Transverse colon (tissue), 4 donors: ENCODE measurements at regions of chr9 and their contacts with region 1.

Region 1: DNA sequence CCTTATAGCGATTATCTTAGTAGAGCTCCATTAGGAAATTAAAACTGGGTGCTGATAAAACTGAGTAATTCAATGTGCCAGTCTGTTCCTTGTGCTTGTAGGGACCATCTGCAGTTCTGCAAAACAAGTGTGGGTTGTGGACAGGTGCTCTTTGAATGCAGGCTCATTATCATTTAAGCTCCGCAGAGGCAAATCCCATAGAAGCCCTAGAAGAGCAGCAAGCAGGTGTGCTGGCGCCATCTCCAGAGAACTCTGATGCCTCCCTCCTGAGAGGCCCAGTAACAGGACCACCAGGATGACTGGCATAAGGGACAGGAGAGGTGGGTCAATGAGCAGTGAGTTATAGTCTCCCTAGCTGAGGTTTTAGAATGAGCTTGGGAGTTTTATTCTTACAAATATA is 1342.4 kb upstream of the DMAC1 start:
- DNase-seq: no peak
- H3K4me3 ChIP-seq: no peak overlapping the region
- H3K27ac ChIP-seq: no peak overlapping the region
- H3K4me1 ChIP-seq: no peaks in the 10 kb centered on the region
- H3K27me3 ChIP-seq: no peaks in the 10 kb centered on the region
- CTCF ChIP-seq: no peak
- EP300 ChIP-seq: no peak
- POLR2A ChIP-seq: no peak

Region 2: DNA sequence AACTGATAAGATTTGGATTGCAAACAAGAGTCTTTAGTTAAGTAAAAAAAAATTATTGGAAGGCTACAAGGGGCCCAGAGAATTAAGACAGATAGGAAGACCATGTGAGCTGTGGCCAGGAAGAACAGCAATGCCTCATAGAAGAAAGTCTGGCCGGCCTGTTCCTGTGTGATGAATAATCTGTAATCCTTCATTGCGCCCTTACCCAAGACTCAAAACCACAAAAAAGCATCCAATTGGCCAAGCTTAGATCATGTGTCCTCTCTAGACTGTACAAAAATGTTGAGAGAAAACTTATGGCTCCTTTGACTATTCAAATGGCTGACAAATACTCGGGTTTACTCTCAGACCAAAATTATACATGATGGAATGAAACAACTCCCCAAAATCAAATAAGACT is 87.3 kb after region 1 on chr9:
- in situ Hi-C with region 1: loop called in 1 of 4 experiments (anchors 25 kb)
- intact Hi-C with region 1: no loop called
- DNase-seq: no peak
- H3K4me3 ChIP-seq: no peak overlapping the region
- H3K27ac ChIP-seq: no peak overlapping the region
- H3K4me1 ChIP-seq: no peaks in the 10 kb centered on the region
- H3K27me3 ChIP-seq: no peaks in the 10 kb centered on the region
- CTCF ChIP-seq: no peak
- EP300 ChIP-seq: no peak
- POLR2A ChIP-seq: no peak